Naive thymus-derived CD4-positive, alpha-beta T cell (primary cell): ENCODE measurements at regions of chr12 and their contacts with region 1.

Region 1: GRCh38 chr12:81644503-81644902 is 114.6 kb downstream of the PPFIA2 start:
- DNase-seq: peak in 7 of 9 donors; percentile 24 to 59 (median 43)
- ATAC-seq: peak; percentile 63
- H3K4me3 ChIP-seq: no peak overlapping the region
- H3K4me3 Mint-ChIP-seq: no peak overlapping the region
- H3K27ac ChIP-seq: no peak overlapping the region
- H3K27ac Mint-ChIP-seq: no peak overlapping the region
- H3K4me1 ChIP-seq: no peaks in the 10 kb centered on the region
- H3K4me1 Mint-ChIP-seq: no peaks in the 10 kb centered on the region
- H3K27me3 ChIP-seq: no peaks in the 10 kb centered on the region
- H3K27me3 Mint-ChIP-seq: peaks cover 0 to 17% (median 9%) of the 10 kb centered on the region in 5 donors

Region 2: DNA sequence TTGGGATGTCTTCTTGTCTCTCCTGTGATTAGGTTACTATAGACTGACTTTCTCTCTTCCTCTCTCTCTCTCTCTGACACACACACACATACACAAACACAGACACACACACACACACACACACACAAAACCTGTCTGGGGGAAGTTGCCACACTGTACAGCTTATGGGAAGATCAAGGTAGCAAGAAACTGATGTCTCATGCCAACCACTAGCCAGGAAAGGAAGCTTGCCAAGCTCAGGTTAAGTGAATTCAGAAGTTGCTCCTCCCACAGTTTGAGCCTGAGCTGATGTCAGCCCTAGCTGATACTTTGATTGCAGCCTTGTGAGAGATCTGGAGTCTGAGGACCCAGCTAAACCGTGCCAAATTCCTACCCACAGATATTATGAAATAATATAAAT is 47.5 kb after region 1 on chr12:
- CTCF ChIA-PET with region 1: no interaction called
- POLR2A ChIA-PET with region 1: no interaction called
- intact Hi-C with region 1: no loop called
- DNase-seq: no peak
- ATAC-seq: no peak
- H3K4me3 ChIP-seq: no peak overlapping the region
- H3K4me3 Mint-ChIP-seq: no peak overlapping the region
- H3K27ac ChIP-seq: no peak overlapping the region
- H3K27ac Mint-ChIP-seq: no peak overlapping the region
- H3K4me1 ChIP-seq: no peaks in the 10 kb centered on the region
- H3K4me1 Mint-ChIP-seq: no peaks in the 10 kb centered on the region
- H3K27me3 ChIP-seq: no peaks in the 10 kb centered on the region
- H3K27me3 Mint-ChIP-seq: peaks cover 0 to 3% (median 0%) of the 10 kb centered on the region in 5 donors

Region 3: DNA sequence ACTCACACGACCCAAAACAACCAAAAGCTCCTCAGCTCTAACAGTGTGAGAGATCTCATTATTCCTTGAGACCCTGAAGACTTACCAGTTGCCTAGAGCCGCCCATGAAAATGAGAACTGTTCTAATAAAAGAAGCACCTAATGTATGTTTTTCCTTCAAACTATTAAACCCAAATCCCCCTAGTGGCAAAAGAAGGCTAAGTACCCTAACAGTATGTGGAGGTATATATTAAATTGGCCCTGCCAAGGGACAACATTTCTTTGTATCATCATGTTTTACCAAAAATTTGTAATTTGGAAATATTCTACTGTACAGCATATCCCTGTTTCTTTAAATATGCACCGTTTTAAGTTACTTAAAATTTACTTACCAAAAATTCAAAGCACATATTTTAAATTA is 152.6 kb after region 1 on chr12:
- CTCF ChIA-PET with region 1: interaction called, 3 read pairs
- POLR2A ChIA-PET with region 1: no interaction called
- intact Hi-C with region 1: loop called (anchors 1 to 5 kb)
- DNase-seq: peak in 2 of 9 donors; percentile 4 to 7
- ATAC-seq: no peak
- H3K4me3 ChIP-seq: no peak overlapping the region
- H3K4me3 Mint-ChIP-seq: no peak overlapping the region
- H3K27ac ChIP-seq: no peak overlapping the region
- H3K27ac Mint-ChIP-seq: no peak overlapping the region
- H3K4me1 ChIP-seq: no peaks in the 10 kb centered on the region
- H3K4me1 Mint-ChIP-seq: no peaks in the 10 kb centered on the region
- H3K27me3 ChIP-seq: no peaks in the 10 kb centered on the region
- H3K27me3 Mint-ChIP-seq: peaks cover 1 to 20% (median 11%) of the 10 kb centered on the region in 5 donors

Region 4: DNA sequence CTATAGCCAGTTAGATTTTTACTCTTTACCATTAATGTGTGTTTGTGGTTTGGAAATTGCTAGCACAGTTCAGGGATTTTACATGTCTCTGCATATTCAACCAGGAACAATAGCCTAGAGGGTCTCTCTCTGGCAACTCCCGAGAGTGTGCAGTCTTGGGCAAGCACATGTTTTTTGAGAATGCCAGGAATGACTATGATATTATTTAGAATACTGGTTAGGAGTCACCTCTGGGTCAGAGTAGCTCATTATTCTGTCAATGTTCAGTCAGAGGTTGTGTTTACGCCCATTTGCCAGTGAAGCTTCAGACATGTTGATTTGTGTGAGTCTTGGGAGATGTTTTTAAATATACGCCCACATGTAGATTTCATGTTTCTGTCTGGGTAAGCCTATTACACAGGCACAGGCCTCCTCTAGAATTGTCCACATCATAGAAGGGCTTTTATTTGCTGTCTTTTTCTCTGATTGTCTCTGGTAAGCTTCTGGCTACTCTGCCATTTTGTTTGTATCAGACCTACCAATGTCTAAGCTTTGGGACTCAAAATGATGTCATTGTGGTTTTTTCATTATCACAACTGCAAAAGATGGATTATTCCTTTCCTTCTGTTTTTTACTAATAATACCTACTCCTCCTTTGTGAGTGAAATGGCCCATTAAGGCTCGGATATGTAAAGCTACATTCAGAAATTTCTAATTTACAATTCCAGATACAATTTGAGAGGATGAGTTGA is 317.8 kb after region 1 on chr12:
- CTCF ChIA-PET with region 1: no interaction called
- POLR2A ChIA-PET with region 1: no interaction called
- intact Hi-C with region 1: loop called in 1 of 2 experiments (anchors 1 kb)
- DNase-seq: no peak
- ATAC-seq: no peak
- H3K4me3 ChIP-seq: no peak overlapping the region
- H3K4me3 Mint-ChIP-seq: no peak overlapping the region
- H3K27ac ChIP-seq: no peak overlapping the region
- H3K27ac Mint-ChIP-seq: no peak overlapping the region
- H3K4me1 ChIP-seq: no peaks in the 10 kb centered on the region
- H3K4me1 Mint-ChIP-seq: peaks cover 0 to 5% (median 3%) of the 10 kb centered on the region in 7 donors
- H3K27me3 ChIP-seq: no peaks in the 10 kb centered on the region
- H3K27me3 Mint-ChIP-seq: no peaks in the 10 kb centered on the region

Region 5: DNA sequence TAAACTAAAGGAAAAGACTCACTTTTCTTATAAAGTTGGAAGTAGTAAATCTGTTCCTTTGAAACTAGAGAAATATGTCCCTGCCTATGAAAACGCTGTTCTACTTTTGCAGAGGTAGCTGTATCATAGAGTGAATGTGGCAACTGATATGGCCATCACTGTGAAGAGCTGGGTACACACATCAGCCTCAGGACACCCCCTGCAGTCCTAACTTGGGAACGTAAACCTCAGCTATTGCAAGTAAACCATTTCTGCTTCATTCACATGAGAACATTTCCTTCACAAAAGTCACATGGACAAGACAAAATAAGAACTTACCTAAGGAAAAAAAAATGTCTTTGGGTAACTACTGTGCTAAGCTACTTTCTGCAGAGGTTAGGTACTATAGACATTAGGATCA is 348.0 kb after region 1 on chr12:
- CTCF ChIA-PET with region 1: interaction called, 36 read pairs
- POLR2A ChIA-PET with region 1: no interaction called
- intact Hi-C with region 1: loop called (anchors 1 kb)
- DNase-seq: peak in 7 of 9 donors; percentile 30 to 61 (median 51)
- ATAC-seq: peak; percentile 85
- H3K4me3 ChIP-seq: no peak overlapping the region
- H3K4me3 Mint-ChIP-seq: no peak overlapping the region
- H3K27ac ChIP-seq: no peak overlapping the region
- H3K27ac Mint-ChIP-seq: no peak overlapping the region
- H3K4me1 ChIP-seq: no peaks in the 10 kb centered on the region
- H3K4me1 Mint-ChIP-seq: peaks cover 0 to 7% (median 5%) of the 10 kb centered on the region in 7 donors
- H3K27me3 ChIP-seq: no peaks in the 10 kb centered on the region
- H3K27me3 Mint-ChIP-seq: no peaks in the 10 kb centered on the region

Region 6: DNA sequence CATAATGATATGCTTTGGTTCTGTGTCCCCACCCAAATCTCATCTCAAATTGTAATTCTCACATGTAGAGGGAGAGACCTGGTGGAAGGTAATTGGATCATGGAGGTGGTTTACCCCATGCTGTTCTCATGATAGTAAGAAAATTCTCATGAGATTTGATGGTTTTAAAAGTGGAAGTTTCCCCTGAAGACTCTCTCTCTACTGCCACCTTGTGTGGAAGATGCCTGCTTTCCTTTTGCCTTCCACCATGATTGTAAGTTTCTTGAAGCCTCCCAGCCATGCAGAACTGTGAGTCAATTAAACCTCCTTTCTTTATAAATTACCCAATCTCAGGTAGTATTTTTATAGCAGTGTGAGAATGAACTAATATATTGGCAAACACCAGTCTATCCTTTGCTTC is 375.0 kb after region 1 on chr12:
- CTCF ChIA-PET with region 1: no interaction called
- POLR2A ChIA-PET with region 1: no interaction called
- intact Hi-C with region 1: loop called (anchors 1 kb)
- DNase-seq: peak in 4 of 9 donors; percentile 3 to 11 (median 4)
- ATAC-seq: no peak
- H3K4me3 ChIP-seq: no peak overlapping the region
- H3K4me3 Mint-ChIP-seq: no peak overlapping the region
- H3K27ac ChIP-seq: no peak overlapping the region
- H3K27ac Mint-ChIP-seq: no peak overlapping the region
- H3K4me1 ChIP-seq: no peaks in the 10 kb centered on the region
- H3K4me1 Mint-ChIP-seq: no peaks in the 10 kb centered on the region
- H3K27me3 ChIP-seq: no peaks in the 10 kb centered on the region
- H3K27me3 Mint-ChIP-seq: peaks cover 0 to 15% (median 0%) of the 10 kb centered on the region in 5 donors

Region 7: GRCh38 chr12:82326905-82327503 is 682.5 kb after region 1 on chr12:
- CTCF ChIA-PET with region 1: interaction called, 4 read pairs
- POLR2A ChIA-PET with region 1: no interaction called
- intact Hi-C with region 1: loop called (anchors 1 kb)
- DNase-seq: peak in 3 of 9 donors; percentile 7 to 25 (median 9)
- ATAC-seq: no peak
- H3K4me3 ChIP-seq: no peak overlapping the region
- H3K4me3 Mint-ChIP-seq: no peak overlapping the region
- H3K27ac ChIP-seq: no peak overlapping the region
- H3K27ac Mint-ChIP-seq: no peak overlapping the region
- H3K4me1 ChIP-seq: no peaks in the 10 kb centered on the region
- H3K4me1 Mint-ChIP-seq: no peaks in the 10 kb centered on the region
- H3K27me3 ChIP-seq: no peaks in the 10 kb centered on the region
- H3K27me3 Mint-ChIP-seq: peaks cover 0 to 6% (median 3%) of the 10 kb centered on the region in 5 donors

Region 8: GRCh38 chr12:82358200-82359114 is 714.0 kb after region 1 on chr12 and contains the starts of genes CCDC59 and METTL25:
- CTCF ChIA-PET with region 1: interaction called, 3 read pairs
- POLR2A ChIA-PET with region 1: interaction called, 4 read pairs
- intact Hi-C with region 1: loop called (anchors 1 kb)
- DNase-seq: peak; percentile 95 to 100 (median 98)
- ATAC-seq: peak; percentile 94
- H3K4me3 ChIP-seq: peak within 1 kb of the TSS; percentile 93
- H3K4me3 Mint-ChIP-seq: peak within 1 kb of the TSS; percentile 92 to 100 (median 98)
- H3K27ac ChIP-seq: peak within 1 kb of the TSS; percentile 95
- H3K27ac Mint-ChIP-seq: peak within 1 kb of the TSS; percentile 99 to 100 (median 100)
- H3K4me1 ChIP-seq: peaks cover 27 to 31% of the 10 kb centered on the region in 2 donors
- H3K4me1 Mint-ChIP-seq: peaks cover 24 to 80% (median 69%) of the 10 kb centered on the region in 7 donors
- H3K27me3 ChIP-seq: no peaks in the 10 kb centered on the region
- H3K27me3 Mint-ChIP-seq: peaks cover 0 to 4% (median 0%) of the 10 kb centered on the region in 5 donors
- total RNA-seq, gene CCDC59: 44.9 to 150 (median 70.8) TPM
- total RNA-seq, gene METTL25: 8.6 to 27.5 (median 14.5) TPM